H1 (cell line): ENCODE measurements at regions of chr6 and their contacts with region 1.

Region 1: DNA sequence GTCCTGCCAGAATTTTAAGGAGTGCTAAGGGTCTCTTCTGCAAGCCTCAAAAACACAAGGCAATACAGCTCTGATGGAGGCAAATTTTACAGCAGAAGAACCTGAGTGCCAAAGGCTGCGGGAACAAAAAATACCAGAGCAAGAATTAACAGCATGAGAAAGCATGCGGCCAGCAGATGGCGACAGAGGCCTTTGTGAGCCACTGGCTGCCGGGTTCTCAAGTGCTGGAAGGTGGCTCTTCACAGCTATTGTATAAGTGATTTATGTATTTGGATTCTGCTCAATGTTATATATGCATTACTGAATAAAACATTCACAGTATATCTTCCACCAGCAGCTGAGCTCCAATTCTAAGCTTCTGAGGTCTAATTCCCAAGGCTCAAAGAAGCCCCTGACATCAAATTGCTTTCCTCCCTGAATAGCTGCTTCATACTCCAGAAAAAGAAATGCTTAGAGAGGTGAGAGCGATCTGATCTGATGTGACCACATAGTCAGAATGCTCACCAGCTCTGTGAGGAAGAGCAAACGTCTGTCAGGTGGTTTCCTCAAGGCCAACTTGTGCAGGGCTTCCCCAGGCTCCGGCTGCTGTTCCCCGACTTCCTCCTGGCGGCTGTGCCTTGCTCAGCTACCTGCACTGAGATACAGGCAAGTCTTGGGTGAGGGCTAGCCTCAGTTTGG is 58.6 kb downstream of the PPP1R3G start:
- DNase-seq: peak; percentile 27 to 92
- H3K4me3 ChIP-seq: no peak overlapping the region
- H3K27ac ChIP-seq: no peak overlapping the region
- H3K4me1 ChIP-seq: peaks cover 0 to 4% (median 0%) of the 10 kb centered on the region in 4 experiments; a peak in 3 of 7 replicates
- H3K27me3 ChIP-seq: no peaks in the 10 kb centered on the region; a peak in 1 of 7 replicates
- CTCF ChIP-seq: peak; percentile 83 to 92 (median 88)
- EP300 ChIP-seq: no peak
- POLR2A ChIP-seq: no peak
- RAD21 ChIP-seq: peak; percentile 91

Region 2: GRCh38 chr6:5054245-5054873 is 89.4 kb before region 1 on chr6:
- CTCF ChIA-PET with region 1: interaction called, 21 read pairs
- POLR2A ChIA-PET with region 1: no interaction called
- DNase-seq: no peak
- H3K4me3 ChIP-seq: no peak overlapping the region
- H3K27ac ChIP-seq: no peak overlapping the region
- H3K4me1 ChIP-seq: no peaks in the 10 kb centered on the region
- H3K27me3 ChIP-seq: no peaks in the 10 kb centered on the region
- CTCF ChIP-seq: no peak
- EP300 ChIP-seq: no peak
- POLR2A ChIP-seq: no peak
- RAD21 ChIP-seq: no peak

Region 3: DNA sequence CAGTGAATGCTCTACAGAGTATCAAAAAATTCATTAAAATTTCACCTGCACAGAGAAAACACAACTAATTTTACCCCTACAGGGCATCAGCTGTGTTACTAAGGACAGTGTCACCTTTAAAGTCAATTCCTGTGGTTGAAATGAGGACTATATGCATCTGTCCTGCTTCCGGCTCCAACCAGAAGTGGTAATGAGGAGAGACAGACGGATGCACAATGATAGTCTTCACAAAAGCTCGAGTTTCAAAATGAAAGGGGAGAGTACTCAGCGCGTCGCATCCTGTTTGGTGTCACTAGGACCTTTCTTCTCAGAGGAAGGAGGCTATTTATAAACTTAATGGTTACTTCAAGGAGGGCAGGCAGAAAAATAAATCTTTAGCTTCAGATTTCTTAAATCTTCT is 30.5 kb after region 1 on chr6:
- CTCF ChIA-PET with region 1: interaction called, 256 read pairs
- POLR2A ChIA-PET with region 1: no interaction called
- DNase-seq: no peak
- H3K4me3 ChIP-seq: no peak overlapping the region
- H3K27ac ChIP-seq: no peak overlapping the region
- H3K4me1 ChIP-seq: peaks cover 0 to 4% (median 0%) of the 10 kb centered on the region in 4 experiments; a peak in 2 of 7 replicates
- H3K27me3 ChIP-seq: no peaks in the 10 kb centered on the region; a peak in 1 of 7 replicates
- CTCF ChIP-seq: no peak
- EP300 ChIP-seq: no peak
- POLR2A ChIP-seq: no peak
- RAD21 ChIP-seq: no peak

Region 4: GRCh38 chr6:5199283-5199682 is 55.5 kb after region 1 on chr6:
- CTCF ChIA-PET with region 1: interaction called, 11 read pairs
- POLR2A ChIA-PET with region 1: no interaction called
- DNase-seq: no peak
- H3K4me3 ChIP-seq: no peak overlapping the region
- H3K27ac ChIP-seq: no peak overlapping the region
- H3K4me1 ChIP-seq: peaks cover 0 to 2% (median under 1%) of the 10 kb centered on the region in 4 experiments; a peak in 4 of 7 replicates
- H3K27me3 ChIP-seq: no peaks in the 10 kb centered on the region
- CTCF ChIP-seq: no peak
- EP300 ChIP-seq: no peak
- POLR2A ChIP-seq: no peak
- RAD21 ChIP-seq: no peak

Region 5: GRCh38 chr6:5214570-5215052 is 70.8 kb after region 1 on chr6:
- CTCF ChIA-PET with region 1: interaction called, 91 read pairs
- POLR2A ChIA-PET with region 1: no interaction called
- DNase-seq: peak; percentile 41 to 90
- H3K4me3 ChIP-seq: no peak overlapping the region
- H3K27ac ChIP-seq: no peak overlapping the region
- H3K4me1 ChIP-seq: 0 out of 7 replicates have a peak, but pooled peaks cover 0 to 2% (median 0%) of the 10 kb centered on the region in 4 experiments
- H3K27me3 ChIP-seq: no peaks in the 10 kb centered on the region
- CTCF ChIP-seq: peak; percentile 96 to 100 (median 98)
- EP300 ChIP-seq: no peak
- POLR2A ChIP-seq: no peak
- RAD21 ChIP-seq: peak; percentile 98 to 99

Region 6: GRCh38 chr6:5379647-5380242 is 236.0 kb after region 1 on chr6:
- CTCF ChIA-PET with region 1: interaction called, 28 read pairs
- POLR2A ChIA-PET with region 1: no interaction called
- DNase-seq: peak; percentile 21 to 64
- H3K4me3 ChIP-seq: no peak overlapping the region
- H3K27ac ChIP-seq: no peak overlapping the region
- H3K4me1 ChIP-seq: peaks cover 0 to 6% (median 4%) of the 10 kb centered on the region in 4 experiments; a peak in 5 of 7 replicates
- H3K27me3 ChIP-seq: no peaks in the 10 kb centered on the region
- CTCF ChIP-seq: peak in 2 of 3 experiments; percentile 80 to 92; a peak in 3 of 4 replicates
- EP300 ChIP-seq: no peak
- POLR2A ChIP-seq: no peak
- RAD21 ChIP-seq: peak; percentile 89 to 93